ENCODE measurements at regions of chr10 and their contacts with region 1.

Region 1: DNA sequence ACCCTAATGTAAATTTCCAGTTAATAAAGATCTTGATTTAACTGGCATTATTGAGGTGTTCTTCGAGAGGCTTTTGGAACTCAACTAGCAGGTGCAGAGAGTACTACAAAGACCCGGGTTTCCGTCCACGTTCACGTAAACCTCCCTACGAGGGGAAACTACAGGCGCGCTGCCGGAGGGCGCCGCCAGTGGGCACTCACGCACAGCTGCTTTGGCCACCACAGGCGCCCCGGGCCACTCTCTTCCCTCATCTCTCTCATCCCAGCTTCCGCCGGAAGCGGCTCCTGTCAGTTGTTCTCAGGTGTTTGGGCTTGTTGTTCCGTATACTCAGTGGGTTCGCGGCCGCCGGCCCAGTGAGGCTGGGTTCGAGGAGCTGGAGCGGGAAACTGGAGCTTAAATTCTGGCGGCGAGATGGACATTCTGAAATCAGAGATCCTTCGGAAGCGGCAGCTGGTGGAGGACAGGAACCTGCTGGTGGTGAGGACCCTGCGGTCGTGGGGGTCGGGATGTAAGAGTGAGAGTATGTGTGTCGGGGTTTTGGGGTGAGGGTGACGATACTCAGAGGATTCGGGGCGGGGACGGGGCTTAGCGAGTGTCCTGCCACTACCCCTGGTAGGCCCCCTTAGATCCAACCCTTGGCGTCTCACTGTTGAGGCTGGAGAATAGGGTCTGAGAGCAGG is at the start of gene PRPF18:
- DNase-seq: peak; percentile 95
- ATAC-seq: peak; percentile 100
- H3K4me3 ChIP-seq: peak within 1 kb of the TSS; percentile 53 to 99 (median 84)
- H3K4me3 Mint-ChIP-seq: peak within 1 kb of the TSS; percentile 95
- H3K27ac ChIP-seq: peak within 1 kb of the TSS; percentile 0 to 85
- H3K27ac Mint-ChIP-seq: peak within 1 kb of the TSS; percentile 90
- H3K4me1 ChIP-seq: peaks cover 10 to 13% of the 10 kb centered on the region in 2 donors
- H3K4me1 Mint-ChIP-seq: peaks cover 31% of the 10 kb centered on the region
- H3K27me3 ChIP-seq: peaks cover 0 to 16% (median 2%) of the 10 kb centered on the region in 4 experiments
- H3K27me3 Mint-ChIP-seq: peaks cover 25% of the 10 kb centered on the region
- CTCF ChIP-seq: peak; percentile 99
- total RNA-seq, gene PRPF18: 28.9 and 31.8 TPM in 2 replicates

Region 2: DNA sequence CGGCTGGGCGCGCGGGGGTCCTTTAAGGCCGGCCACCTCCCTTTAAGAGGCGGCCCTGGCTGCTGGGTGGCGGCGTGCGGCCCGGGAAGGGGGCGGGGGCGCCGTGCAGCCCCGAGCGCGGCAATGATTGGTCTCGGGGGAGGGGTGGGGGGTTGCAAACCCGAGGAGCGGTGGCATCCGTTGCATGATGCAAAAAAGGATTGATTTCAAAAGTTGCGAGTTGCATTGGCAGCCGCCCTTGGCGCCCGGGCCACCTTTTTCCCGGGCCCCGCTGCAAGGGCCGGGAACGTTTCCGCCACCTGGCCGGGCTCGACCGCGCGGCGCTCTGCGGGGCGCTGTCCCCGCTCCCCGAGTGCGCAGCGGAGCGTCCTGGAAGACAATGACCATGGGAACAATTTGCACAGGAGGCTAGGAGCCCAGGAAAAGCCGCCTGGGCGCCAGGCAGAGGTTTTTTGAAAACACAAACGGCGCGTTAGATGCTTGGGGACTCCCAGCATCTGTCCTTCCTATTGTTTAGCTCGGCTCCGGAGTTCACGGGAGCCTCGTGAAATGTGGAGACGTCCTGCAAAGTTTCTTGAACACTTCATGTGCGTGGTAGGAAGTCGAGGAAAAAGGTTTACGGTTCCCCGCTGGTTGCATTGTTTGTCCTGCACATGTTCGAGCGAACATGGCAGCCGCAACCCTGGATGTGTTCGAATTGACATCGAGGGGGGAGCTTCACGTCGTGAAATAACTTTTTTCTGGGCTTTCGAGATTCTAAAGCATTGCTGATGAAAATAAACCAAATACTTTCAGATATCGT is 238.4 kb before region 1 on chr10 and contains the start of gene SEPHS1:
- CTCF ChIA-PET with region 1: no interaction called
- POLR2A ChIA-PET with region 1: no interaction called
- intact Hi-C with region 1: loop called (anchors 2 kb)
- DNase-seq: peak; percentile 81
- ATAC-seq: peak; percentile 69
- H3K4me3 ChIP-seq: peak within 1 kb of the TSS; percentile 55 to 87 (median 82)
- H3K4me3 Mint-ChIP-seq: peak within 1 kb of the TSS; percentile 92
- H3K27ac ChIP-seq: peak within 1 kb of the TSS; percentile 54 to 82
- H3K27ac Mint-ChIP-seq: peak within 1 kb of the TSS; percentile 93
- H3K4me1 ChIP-seq: peaks cover 26 to 38% of the 10 kb centered on the region in 2 donors
- H3K4me1 Mint-ChIP-seq: peaks cover 58% of the 10 kb centered on the region
- H3K27me3 ChIP-seq: peaks cover 0 to 30% (median 7%) of the 10 kb centered on the region in 4 experiments
- H3K27me3 Mint-ChIP-seq: peaks cover 4% of the 10 kb centered on the region
- CTCF ChIP-seq: no peak
- total RNA-seq, gene SEPHS1: 25.3 and 29.1 TPM in 2 replicates

Region 3: DNA sequence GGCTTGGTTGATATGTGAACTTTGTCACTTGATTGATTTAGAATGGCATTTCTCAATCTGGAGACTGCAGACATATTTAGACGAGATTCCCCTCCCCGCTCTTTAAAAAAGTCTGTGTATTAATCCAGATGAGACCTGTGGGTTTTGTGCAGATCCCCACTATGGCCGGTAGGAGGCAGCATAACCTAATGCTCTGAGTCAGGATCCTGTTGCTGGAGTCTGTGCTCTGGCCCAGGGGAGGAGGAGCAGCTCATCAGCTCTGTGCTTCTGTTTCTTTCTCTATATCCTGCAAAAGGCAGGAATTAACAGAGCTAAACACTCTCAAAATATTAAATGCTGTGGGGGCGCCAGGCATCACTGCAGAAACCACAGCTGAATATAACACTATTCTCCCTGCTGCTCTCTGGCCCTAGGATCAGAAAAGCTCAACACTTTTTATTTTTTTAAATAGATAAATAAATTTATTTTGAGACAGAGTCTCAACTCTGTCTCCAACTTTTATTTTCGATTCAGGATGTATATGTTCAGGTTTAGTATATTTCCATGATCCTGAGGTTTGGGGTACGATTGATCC is 214.8 kb before region 1 on chr10:
- CTCF ChIA-PET with region 1: interaction called, 7 read pairs
- POLR2A ChIA-PET with region 1: no interaction called
- intact Hi-C with region 1: loop called (anchors 1 kb)
- DNase-seq: peak; percentile 84
- ATAC-seq: peak; percentile 96
- H3K4me3 ChIP-seq: no peak overlapping the region
- H3K4me3 Mint-ChIP-seq: no peak overlapping the region
- H3K27ac ChIP-seq: no peak overlapping the region
- H3K27ac Mint-ChIP-seq: no peak overlapping the region
- H3K4me1 ChIP-seq: no peaks in the 10 kb centered on the region
- H3K4me1 Mint-ChIP-seq: no peaks in the 10 kb centered on the region
- H3K27me3 ChIP-seq: no peaks in the 10 kb centered on the region
- H3K27me3 Mint-ChIP-seq: peaks cover 4% of the 10 kb centered on the region
- CTCF ChIP-seq: peak; percentile 95

Region 4: DNA sequence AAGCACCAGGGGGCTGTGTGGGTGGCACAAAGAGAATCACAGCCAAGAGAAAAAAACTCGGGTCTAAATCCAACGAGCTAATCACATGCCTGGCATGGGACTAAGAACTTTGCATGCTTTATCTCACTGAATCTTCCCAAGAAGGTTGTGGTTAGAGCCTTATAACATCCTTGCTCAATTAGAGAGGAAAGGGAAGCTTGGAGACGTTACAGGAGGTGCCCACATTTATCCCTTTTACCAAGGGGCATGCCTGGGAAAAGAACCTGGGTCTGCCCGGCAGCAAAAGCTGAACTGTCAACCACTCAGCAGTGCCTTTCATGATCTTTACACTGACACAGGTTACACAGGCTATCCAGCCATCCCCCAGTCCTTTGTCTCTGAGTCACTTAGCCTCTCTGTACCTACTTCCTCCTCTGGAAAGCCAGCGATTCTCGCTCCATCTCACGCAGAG is 190.1 kb after region 1 on chr10:
- CTCF ChIA-PET with region 1: no interaction called
- POLR2A ChIA-PET with region 1: no interaction called
- intact Hi-C with region 1: loop called (anchors 10 kb)
- DNase-seq: no peak
- ATAC-seq: peak; percentile 67
- H3K4me3 ChIP-seq: no peak overlapping the region
- H3K4me3 Mint-ChIP-seq: peak overlapping the region; percentile 26
- H3K27ac ChIP-seq: no peak overlapping the region
- H3K27ac Mint-ChIP-seq: no peak overlapping the region
- H3K4me1 ChIP-seq: peaks cover 10 to 13% of the 10 kb centered on the region in 2 donors
- H3K4me1 Mint-ChIP-seq: peaks cover 42% of the 10 kb centered on the region
- H3K27me3 ChIP-seq: peaks cover 0 to 12% (median 3%) of the 10 kb centered on the region in 4 experiments
- H3K27me3 Mint-ChIP-seq: peaks cover 25% of the 10 kb centered on the region
- CTCF ChIP-seq: no peak